ENCODE measurements at regions of chr3 and their contacts with region 1.

Region 1: GRCh38 chr3:50221411-50222168 is 14.4 kb upstream of the GNAI2 start:
- DNase-seq: peak; percentile 78
- ATAC-seq: peak; percentile 84
- H3K4me3 Mint-ChIP-seq: no peak overlapping the region
- H3K27ac Mint-ChIP-seq: no peak overlapping the region; the same call in 1 of the 2 replicates
- H3K4me1 Mint-ChIP-seq: peaks cover 9% of the 10 kb centered on the region
- H3K27me3 Mint-ChIP-seq: peaks cover under 1% of the 10 kb centered on the region
- CTCF ChIP-seq: no peak; the same call in 1 of the 2 replicates

Region 2: DNA sequence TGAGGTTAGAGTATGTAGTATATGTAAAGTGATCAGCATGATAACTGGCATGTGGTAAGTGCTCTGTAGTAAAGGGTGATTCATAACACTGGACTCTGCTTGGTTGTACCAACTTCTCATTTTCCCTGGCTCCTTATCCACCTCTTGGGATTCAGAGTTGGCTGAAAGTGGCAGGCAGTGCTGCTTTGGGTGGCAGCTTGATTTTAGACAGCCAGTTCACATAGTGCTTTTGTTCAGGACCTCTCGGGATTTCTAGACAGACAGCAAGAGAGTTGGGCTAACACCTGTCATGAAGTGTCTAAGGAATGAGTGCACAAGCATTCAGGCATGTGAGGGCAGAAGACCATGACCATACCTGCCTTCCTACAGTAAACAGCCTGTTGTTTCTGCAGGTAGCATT is 212.7 kb before region 1 on chr3:
- CTCF ChIA-PET with region 1: no interaction called
- POLR2A ChIA-PET with region 1: no interaction called
- DNase-seq: no peak
- ATAC-seq: no peak
- H3K4me3 Mint-ChIP-seq: no peak overlapping the region
- H3K27ac Mint-ChIP-seq: peak overlapping the region; percentile 34; the same call in 1 of the 2 replicates
- H3K4me1 Mint-ChIP-seq: peaks cover 4% of the 10 kb centered on the region
- H3K27me3 Mint-ChIP-seq: no peaks in the 10 kb centered on the region
- CTCF ChIP-seq: no peak

Region 3: DNA sequence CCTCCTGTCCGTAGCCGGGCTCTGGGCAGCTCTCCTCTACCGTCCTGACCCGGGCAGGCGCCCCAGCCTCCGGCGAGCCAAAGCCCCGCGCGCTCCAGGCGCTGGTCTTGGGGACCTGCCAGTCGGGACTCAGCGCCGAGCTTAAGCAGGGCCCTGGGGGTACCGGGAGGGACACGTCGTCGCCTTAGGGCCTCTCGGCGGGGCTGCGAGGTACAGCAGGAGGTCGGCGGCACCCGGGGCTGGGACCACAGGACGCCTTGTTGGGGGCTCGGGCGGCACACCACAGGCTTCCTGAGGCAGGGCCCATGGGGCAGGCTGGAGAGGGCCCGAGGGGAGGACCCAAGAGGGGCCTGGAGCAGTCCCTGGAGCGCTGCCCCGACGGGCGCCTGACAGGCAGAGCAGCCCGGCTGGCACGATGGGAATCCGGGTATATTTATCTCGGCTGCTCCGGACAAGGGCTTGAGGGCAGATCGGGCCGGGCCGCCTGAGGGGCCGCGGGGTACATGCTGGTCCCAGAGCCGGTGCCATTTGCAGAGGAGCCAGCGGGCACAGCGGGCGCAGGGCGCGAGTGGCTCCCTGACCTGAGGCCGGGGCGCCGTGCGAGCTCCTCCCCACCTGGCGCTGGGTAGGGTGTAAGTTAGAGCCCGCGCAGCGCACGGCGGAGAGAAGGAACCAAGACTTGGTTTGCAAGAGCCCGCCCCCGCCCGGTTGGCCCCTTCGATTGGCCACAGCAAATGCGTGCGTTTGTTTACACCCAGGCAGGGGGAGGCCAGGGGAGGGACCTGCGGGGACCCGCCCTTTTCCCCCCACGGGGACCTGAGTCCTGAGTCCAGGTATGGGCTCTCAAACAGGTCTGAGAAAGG is 15.9 kb before region 1 on chr3:
- CTCF ChIA-PET with region 1: interaction called, 82 read pairs
- POLR2A ChIA-PET with region 1: interaction called, 4 read pairs
- DNase-seq: peak; percentile 87
- ATAC-seq: peak; percentile 70
- H3K4me3 Mint-ChIP-seq: peak overlapping the region; percentile 67
- H3K27ac Mint-ChIP-seq: no peak overlapping the region
- H3K4me1 Mint-ChIP-seq: peaks cover under 1% of the 10 kb centered on the region; the same call in 1 of the 2 replicates
- H3K27me3 Mint-ChIP-seq: peaks cover 38% of the 10 kb centered on the region
- CTCF ChIP-seq: no peak

Region 4: GRCh38 chr3:50235716-50236496 is 14.3 kb after region 1 on chr3 and contains the start of gene GNAI2:
- CTCF ChIA-PET with region 1: interaction called, 88 read pairs
- POLR2A ChIA-PET with region 1: interaction called, 22 read pairs
- DNase-seq: peak; percentile 99
- ATAC-seq: peak; percentile 94
- H3K4me3 Mint-ChIP-seq: peak within 1 kb of the TSS; percentile 97
- H3K27ac Mint-ChIP-seq: peak within 1 kb of the TSS; percentile 93
- H3K4me1 Mint-ChIP-seq: peaks cover 48% of the 10 kb centered on the region
- H3K27me3 Mint-ChIP-seq: no peaks in the 10 kb centered on the region
- CTCF ChIP-seq: no peak
- total RNA-seq, gene GNAI2: 181 to 185 TPM (median 185 TPM) in 3 replicates

Region 5: DNA sequence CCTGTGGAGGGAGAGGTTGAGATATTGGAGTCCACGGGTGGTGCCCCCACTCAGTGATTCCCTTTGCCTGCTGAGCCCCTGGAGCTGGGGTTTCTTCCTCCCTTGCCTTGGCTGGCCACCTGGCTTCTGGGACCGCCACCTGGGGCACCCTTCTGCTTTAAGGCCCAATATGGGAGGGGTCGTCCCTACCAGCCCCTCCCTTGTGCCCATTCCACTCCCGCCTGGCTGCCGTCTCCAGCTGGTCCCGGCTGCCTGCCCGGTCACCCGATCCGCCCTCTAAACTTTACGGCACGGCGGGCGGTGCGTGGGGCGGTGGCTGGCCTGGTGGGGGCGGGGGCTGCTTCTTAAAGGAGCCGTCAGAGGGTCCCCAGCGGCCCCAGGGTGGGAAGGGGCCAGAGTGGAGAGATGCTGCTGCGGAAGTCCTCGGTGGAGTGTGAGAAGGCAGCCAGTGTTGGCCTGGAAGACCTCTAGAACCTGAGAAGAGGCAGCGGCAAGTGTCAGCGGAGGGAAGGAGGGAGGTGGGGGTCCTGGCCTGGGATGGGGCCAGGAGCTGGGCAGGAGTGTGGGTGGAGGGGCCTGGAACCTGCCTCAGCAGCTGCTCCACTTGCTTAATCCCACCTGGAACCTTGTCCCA is 45.8 kb after region 1 on chr3:
- CTCF ChIA-PET with region 1: interaction called, 73 read pairs
- POLR2A ChIA-PET with region 1: interaction called, 13 read pairs
- DNase-seq: peak; percentile 52
- ATAC-seq: no peak
- H3K4me3 Mint-ChIP-seq: peak overlapping the region; percentile 24; the same call in 1 of the 2 replicates
- H3K27ac Mint-ChIP-seq: no peak overlapping the region
- H3K4me1 Mint-ChIP-seq: peaks cover 51% of the 10 kb centered on the region
- H3K27me3 Mint-ChIP-seq: no peaks in the 10 kb centered on the region; the same call in none of the 2 replicates
- CTCF ChIP-seq: no peak